BJ (cell line): ENCODE measurements at regions of chr16 and their contacts with region 1.

Region 1: GRCh38 chr16:75471723-75472633 is 7.5 kb upstream of the TMEM170A start:
- DNase-seq: no peak
- H3K4me3 ChIP-seq: no peak overlapping the region
- H3K27me3 ChIP-seq: no peaks in the 10 kb centered on the region
- CTCF ChIP-seq: peak; percentile 78

Region 2: DNA sequence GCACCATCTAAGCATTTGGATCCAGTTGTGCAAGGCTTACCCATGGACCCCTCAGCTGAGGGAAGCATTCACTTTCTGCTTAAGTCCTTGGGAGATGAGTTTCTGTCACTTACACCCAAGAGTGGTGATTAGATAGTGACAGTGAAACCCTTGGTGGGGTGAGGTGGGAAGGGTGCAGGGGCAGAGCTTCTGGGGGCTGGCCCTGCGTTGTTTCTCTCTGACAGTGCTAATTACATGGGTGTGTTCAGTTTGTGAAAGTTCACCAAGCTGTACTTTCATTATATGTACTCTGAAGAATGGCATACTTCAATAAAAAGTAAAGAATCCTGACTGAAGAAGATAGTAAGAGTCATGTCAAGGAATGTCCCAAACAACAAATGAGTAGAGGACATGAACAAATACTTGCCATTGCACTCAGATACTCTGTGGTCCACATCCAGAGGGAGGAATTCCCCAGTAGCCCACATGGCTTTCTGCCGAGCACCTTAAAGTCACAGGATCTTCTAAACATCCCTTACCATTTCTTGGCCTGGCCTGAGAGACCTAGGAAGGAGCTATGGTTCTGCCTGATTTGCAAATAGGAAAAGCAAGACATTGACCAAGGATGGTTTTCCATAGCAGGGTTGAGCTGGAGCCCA is 14.8 kb after region 1 on chr16:
- CTCF ChIA-PET with region 1: interaction called, 10 read pairs
- POLR2A ChIA-PET with region 1: no interaction called
- DNase-seq: no peak
- H3K4me3 ChIP-seq: no peak overlapping the region
- H3K27me3 ChIP-seq: no peaks in the 10 kb centered on the region; the same call in 1 of the 2 replicates
- CTCF ChIP-seq: no peak

Region 3: DNA sequence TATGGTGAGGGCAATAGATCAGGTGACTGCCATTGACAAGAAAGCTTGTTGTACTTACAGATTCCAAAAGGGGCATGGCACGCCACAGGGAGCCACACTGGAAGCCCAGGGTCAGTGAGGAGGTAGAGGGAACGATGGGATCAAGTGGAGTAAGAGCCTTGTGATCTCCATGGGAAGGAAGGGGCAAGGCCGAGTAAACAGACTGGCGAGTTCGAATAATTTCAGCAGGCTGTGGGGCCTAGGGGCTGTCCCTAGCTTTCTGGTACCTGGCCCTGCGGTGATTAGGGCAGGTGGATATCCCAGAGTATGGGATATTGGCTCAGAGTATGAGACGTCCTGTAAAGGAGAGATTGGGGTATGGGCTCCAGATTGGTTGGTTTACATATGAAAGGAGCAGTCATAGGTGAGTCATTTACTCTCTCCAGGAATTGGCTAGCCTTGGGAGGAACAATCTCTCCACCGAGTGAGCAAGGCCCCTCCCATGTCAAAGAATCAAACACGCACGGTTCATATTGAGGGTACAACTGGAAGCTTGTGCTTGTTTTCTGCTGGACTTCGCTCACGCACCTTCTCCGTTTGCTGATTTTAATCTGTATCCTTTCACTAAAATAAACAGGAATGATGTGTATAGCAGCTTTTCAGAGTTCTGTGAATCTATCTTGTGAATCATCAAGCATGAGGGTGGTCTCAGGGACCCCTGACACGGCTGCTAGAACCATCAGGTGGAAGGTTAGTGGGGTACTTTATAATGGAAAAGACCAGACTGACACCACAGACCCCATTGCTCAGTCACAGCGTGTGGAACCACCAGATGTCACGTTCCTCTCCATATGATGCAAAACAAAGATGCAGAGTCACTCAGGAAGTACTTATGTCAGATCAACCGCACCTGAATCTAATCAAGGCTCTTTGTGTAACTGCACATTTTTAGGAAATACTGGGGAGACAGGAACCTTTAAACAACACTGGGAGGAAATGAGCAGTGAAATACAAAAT is 122.1 kb after region 1 on chr16:
- CTCF ChIA-PET with region 1: interaction called, 17 read pairs
- POLR2A ChIA-PET with region 1: no interaction called
- DNase-seq: peak; percentile 32
- H3K4me3 ChIP-seq: no peak overlapping the region
- H3K27me3 ChIP-seq: no peaks in the 10 kb centered on the region
- CTCF ChIP-seq: no peak

Region 4: DNA sequence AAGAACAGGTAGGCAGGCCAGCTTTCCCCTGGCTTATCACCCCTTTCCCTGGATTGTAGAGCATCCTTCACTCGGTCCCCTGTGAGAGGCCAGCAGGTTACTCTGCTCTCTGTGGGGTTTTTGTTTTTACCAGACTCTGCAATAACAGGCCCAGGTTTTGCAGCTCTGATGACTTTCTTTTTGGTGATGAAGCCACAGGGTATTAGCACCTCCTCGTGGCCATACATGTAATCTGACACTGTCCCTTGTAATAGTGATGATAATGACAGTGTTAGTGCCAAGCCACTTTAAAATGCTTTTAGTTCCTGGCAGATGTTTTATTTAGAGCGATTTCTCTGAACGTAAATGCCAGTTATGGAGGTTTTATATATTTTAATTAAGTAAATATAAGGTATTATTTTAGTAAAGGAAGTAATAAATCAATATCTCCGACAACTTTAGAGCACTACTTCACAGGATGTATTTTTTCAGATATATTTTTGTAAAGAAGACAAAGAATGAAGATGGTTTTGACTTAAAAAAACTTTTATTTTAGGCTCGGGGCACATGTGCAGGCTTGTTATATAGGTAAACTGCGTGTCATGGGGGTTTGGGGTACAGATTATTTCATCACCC is 292.3 kb after region 1 on chr16:
- CTCF ChIA-PET with region 1: interaction called, 27 read pairs
- POLR2A ChIA-PET with region 1: no interaction called
- DNase-seq: no peak
- H3K4me3 ChIP-seq: no peak overlapping the region
- H3K27me3 ChIP-seq: no peaks in the 10 kb centered on the region
- CTCF ChIP-seq: peak; percentile 80